ENCODE measurements at regions of chr14 and their contacts with region 1.

Region 1: DNA sequence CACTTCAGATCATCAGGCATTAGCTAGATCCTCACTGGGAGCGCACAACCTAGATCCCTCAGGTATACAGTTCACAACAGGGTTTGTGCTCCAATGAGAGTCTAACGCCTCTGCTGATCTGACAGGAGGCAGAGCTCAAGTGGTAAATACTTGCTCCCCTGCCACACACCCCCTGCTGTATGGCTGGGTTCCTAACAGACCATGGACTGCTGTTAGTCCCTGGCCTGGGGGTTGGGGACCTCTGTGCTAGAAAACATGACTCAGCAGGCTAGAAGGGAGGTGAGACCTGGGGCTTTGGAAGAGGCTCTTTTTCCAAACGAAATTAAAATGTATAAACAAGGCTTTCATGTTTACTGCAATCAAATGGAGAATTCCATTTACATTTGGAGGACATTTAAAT is 691.1 kb downstream of the FLRT2 start:
- DNase-seq: no peak
- H3K4me3 ChIP-seq: no peak overlapping the region
- CTCF ChIP-seq: no peak

Region 2: DNA sequence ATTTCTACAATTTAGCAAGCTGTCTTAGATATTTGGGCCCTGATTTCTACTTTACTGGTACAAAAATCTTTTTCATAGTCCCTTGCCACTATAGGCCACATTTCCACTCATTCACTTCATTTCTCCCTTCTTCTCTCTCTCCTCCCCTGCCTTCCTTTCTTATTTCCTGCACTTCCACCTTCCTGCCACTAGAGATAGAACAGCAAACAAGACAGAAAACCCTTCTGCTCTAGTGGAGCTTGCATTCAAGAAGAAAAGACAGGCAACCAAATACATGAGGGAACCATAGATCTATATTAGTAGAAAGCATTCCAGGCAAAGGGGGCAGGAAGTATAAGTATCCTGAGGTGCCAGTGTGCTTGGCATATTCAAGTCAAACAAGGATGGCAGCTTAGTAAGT is 67.5 kb before region 1 on chr14:
- in situ Hi-C with region 1: loop called (anchors 5 kb)
- DNase-seq: no peak
- H3K4me3 ChIP-seq: no peak overlapping the region
- CTCF ChIP-seq: no peak

Region 3: DNA sequence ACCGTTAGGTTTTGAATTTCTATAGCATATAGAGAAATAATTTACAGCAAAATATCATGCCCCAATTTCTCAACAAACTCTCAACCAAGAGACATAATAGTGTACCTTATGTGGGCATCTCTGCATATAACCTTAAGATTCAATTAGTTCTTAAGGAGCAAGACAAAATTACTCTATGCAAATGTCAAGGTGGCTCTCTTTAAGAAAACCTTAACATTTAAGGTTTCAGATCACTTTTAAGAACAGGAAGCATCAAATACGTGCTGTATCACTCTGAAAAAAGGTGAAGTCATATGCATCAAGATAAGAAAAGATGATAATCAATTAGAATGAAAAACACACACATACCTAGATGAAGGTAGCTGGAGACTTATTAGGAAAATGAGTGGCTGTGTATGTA is 37.0 kb after region 1 on chr14:
- in situ Hi-C with region 1: no loop called
- DNase-seq: no peak
- H3K4me3 ChIP-seq: no peak overlapping the region
- CTCF ChIP-seq: no peak

Region 4: DNA sequence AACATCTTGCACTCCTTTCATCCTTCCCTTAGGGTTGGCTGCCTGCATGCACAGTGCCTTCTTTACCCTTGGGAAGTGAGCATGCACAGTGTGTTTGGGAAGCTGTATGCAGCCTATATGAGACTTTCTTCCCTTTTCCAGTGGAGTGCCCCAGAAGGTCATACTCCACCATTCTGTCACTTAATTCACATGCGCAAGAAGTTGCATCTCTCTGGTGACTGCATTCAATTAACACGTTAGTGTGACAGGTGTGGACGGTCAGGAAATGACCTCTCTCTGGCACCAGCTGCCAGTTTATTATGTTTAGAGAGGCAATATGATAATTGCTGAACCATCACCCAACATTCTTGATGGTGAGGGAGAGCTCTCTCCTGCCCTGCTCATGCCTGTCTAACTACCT is 79.0 kb after region 1 on chr14:
- in situ Hi-C with region 1: no loop called
- DNase-seq: no peak
- H3K4me3 ChIP-seq: no peak overlapping the region
- CTCF ChIP-seq: no peak

Measured in astrocyte of the cerebellum (primary cell).